ENCODE measurements at regions of chr7 and their contacts with region 1.

Region 1: GRCh38 chr7:98841179-98841997 is 28.4 kb downstream of the TMEM130 start:
- DNase-seq: peak; percentile 75
- CTCF ChIP-seq: peak; percentile 95

Region 2: GRCh38 chr7:98420966-98421612 is 420.3 kb before region 1 on chr7:
- CTCF ChIA-PET with region 1: interaction called, 358 read pairs
- POLR2A ChIA-PET with region 1: no interaction called
- DNase-seq: peak; percentile 82
- CTCF ChIP-seq: peak; percentile 95

Region 3: GRCh38 chr7:98619450-98620321 is 221.7 kb before region 1 on chr7:
- CTCF ChIA-PET with region 1: no interaction called
- POLR2A ChIA-PET with region 1: no interaction called
- DNase-seq: peak; percentile 15
- CTCF ChIP-seq: no peak